ENCODE measurements at regions of chr1 and their contacts with region 1.

Region 1: GRCh38 chr1:221741711-221742554 is at the start of gene DUSP10:
- DNase-seq: peak; percentile 99 to 100
- H3K4me3 ChIP-seq: peak within 1 kb of the TSS; percentile 80 to 87
- H3K27ac ChIP-seq: peak within 1 kb of the TSS; percentile 98
- H3K4me1 ChIP-seq: no peaks in the 10 kb centered on the region
- H3K27me3 ChIP-seq: no peaks in the 10 kb centered on the region
- CTCF ChIP-seq: peak in 1 of 3 experiments; percentile 5
- total RNA-seq, gene DUSP10: 5.7 TPM

Region 2: GRCh38 chr1:220879076-220879508 is 862.8 kb before region 1 on chr1 and contains the start of gene HLX:
- intact Hi-C with region 1: loop called (anchors 1 kb)
- DNase-seq: peak; percentile 64 to 94
- H3K4me3 ChIP-seq: peak within 1 kb of the TSS; percentile 83 to 98
- H3K27ac ChIP-seq: peak within 1 kb of the TSS; percentile 93 to 94
- H3K4me1 ChIP-seq: peaks cover 0 to 7% of the 10 kb centered on the region in 2 donors
- H3K27me3 ChIP-seq: no peaks in the 10 kb centered on the region
- CTCF ChIP-seq: no peak
- total RNA-seq, gene HLX: 39.3 TPM

Region 3: DNA sequence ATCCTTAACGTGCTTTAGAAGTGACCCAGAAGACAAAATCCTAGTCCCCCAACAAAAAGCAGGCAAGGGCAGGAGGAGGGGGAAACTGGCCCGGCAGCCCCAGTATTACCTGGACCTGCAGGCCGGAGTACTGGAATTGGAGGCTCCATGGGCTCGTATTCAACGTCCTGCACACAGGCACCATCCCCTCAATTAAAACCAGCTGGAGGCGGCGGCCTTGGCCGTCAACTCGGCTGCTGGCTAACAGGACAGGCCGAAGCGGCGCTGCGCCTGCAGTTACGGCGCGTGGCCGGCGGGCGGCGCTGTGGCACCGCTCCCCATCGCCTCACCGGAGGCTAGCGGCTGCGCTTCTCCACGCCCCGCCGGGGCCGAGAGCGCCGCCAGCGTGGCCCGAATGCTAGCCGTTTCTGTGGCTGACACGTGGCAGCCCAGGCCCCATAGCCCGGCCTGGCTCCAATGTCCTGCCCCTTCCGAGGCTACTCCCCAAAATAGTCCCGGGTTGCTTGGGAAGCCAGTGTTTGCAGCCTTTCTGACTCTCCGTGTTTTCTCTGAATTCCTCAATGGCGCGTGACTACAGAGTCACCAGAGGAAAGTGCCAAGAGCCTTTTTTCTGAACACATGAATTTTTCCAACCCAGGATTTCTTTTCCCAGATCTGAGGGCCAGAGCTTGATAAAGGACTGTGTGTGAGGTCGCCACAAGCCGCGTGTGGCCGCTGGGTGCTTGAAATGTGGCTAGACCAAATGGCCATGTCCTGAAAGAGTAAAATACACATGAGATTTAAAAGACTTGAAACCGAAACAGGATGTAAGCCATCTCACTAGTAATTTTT is 723.5 kb after region 1 on chr1:
- intact Hi-C with region 1: loop called (anchors 5 kb)
- DNase-seq: peak; percentile 82 to 98
- H3K4me3 ChIP-seq: peak overlapping the region; percentile 57 to 62
- H3K27ac ChIP-seq: peak overlapping the region; percentile 90 to 93
- H3K4me1 ChIP-seq: peaks cover 0 to 11% of the 10 kb centered on the region in 2 donors
- H3K27me3 ChIP-seq: no peaks in the 10 kb centered on the region
- CTCF ChIP-seq: peak; percentile 96 to 100 (median 99)

Region 4: DNA sequence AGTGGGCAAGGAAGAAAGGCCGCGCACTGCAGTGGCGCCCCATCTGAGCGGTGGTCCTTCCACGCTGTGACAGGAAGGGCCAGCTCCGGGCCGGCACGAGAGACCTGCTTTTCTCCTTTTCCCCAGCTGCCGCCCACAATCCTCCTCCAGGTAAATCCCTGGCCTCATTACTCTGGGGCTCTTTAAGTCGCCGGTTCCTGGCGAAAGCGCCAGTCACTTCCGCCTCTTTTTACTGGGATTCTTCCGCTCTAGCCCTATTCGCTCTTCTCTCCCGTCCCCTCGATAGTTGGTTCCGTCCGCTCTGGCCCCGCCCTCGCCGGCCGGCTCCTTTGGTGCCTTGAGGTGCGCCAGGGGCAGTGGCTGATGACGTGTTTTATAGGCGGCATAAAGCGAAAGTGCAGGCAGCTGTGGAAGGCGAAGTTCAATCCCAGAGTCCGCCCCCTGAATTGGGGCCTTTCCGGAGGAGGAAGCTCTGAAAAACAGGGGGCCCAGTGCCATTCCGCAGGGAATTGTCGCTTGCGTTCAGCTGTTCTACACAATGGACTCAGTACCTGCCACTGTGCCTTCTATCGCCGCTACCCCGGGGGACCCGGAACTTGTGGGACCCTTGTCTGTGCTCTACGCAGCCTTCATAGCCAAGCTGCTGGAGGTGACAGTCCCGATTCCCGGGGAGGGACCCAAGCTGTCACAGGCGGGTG is 902.2 kb after region 1 on chr1:
- intact Hi-C with region 1: loop called (anchors 5 kb)
- DNase-seq: peak; percentile 97 to 99
- H3K4me3 ChIP-seq: peak overlapping the region; percentile 83
- H3K27ac ChIP-seq: peak overlapping the region; percentile 89 to 98
- H3K4me1 ChIP-seq: peaks cover 0 to 11% of the 10 kb centered on the region in 2 donors
- H3K27me3 ChIP-seq: no peaks in the 10 kb centered on the region
- CTCF ChIP-seq: no peak

Region 5: GRCh38 chr1:222814536-222815439 is 1072.9 kb after region 1 on chr1 and contains the start of gene DISP1:
- intact Hi-C with region 1: loop called (anchors 5 kb)
- DNase-seq: peak in 1 of 2 donors; percentile 91
- H3K4me3 ChIP-seq: peak within 1 kb of the TSS; percentile 61 to 95
- H3K27ac ChIP-seq: peak within 1 kb of the TSS; percentile 91 to 100
- H3K4me1 ChIP-seq: peaks cover 4 to 13% of the 10 kb centered on the region in 2 donors
- H3K27me3 ChIP-seq: no peaks in the 10 kb centered on the region
- CTCF ChIP-seq: no peak
- total RNA-seq, gene DISP1: 23.2 TPM